Activated naive CD4-positive, alpha-beta T cell treated with anti-CD3 and anti-CD28 coated beads, Interleukin-2, amount 10 ng/mL, durations not matched to agents 7 days and 5 days (primary cell): ENCODE measurements at regions of chr10 and their contacts with region 1.

Region 1: DNA sequence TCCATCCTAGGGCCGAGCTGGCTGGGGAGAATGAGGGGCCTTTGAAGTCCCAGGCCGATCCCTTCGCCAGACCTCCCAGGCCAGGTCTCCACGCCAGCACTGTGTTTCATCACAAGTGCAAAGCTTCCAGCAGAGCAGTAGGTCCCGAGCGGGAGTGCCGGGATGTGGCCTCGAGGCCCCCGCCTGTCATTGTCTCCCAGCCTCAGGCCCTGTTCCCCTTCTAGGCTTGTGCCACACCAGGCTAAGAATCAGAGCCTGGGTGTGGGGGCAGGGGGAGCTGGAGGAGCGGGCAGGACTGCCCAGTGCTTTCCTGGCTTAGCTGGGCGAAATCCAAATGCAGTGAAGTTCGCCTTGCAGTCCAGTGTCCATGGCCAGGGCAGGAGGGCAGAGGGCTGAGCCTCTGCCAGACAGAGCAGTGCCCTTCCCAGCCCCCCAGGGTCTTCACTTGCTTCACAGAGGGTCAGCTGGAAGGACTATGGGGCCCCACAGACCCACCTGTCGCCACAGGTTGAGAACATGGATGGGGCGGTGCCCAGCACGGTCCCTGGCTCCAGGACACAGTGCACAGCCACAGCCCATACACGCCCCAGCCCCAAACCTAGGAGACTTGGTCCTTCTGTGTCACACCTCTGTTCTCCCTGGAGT is 20.2 kb upstream of the PFKFB3 start:
- DNase-seq: no peak
- H3K4me3 Mint-ChIP-seq: no peak overlapping the region
- H3K27ac Mint-ChIP-seq: no peak overlapping the region
- H3K4me1 Mint-ChIP-seq: peaks cover 30% of the 10 kb centered on the region
- H3K27me3 Mint-ChIP-seq: no peaks in the 10 kb centered on the region

Region 2: DNA sequence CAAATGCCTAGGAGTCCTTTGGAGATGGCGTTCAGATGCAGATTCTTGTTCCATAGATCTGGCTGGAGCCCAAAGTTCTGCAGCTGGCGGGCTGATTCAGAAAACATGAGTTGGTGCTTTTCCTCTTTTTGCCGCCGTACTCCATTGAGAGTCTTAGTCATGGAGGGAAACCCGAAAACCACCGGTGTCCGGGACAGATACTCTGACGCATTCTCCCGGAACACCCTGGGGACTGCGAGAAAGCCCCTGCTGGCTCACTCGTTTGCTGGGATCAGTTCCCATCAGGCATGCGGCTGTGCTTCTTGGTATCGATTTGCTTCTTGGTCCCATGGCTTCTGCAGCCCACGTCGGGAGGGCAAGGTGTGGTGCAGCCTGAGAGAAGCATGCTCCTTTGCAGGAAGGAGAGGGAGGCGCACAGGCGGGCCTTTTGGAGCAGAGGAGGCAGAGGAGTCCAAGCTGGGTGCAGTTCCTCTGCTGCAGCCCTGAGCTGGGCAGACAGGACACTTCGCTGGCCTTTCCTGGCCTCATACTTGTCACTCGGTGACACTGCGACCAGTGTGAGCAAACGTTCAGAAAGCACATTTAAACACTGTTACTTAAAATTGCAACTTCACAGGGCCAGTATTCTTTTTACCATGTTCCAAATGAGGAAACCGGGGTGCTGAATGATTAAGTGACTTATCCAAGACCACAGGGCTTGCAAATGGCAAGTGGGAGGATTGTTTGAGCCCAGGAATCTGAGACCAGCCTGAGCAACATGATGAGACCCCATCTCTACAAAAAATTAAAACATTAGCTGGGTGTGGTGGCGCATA is 10.5 kb before region 1 on chr10:
- CTCF ChIA-PET with region 1: interaction called, 13 read pairs
- DNase-seq: no peak
- H3K4me3 Mint-ChIP-seq: no peak overlapping the region
- H3K27ac Mint-ChIP-seq: no peak overlapping the region
- H3K4me1 Mint-ChIP-seq: peaks cover 84% of the 10 kb centered on the region
- H3K27me3 Mint-ChIP-seq: no peaks in the 10 kb centered on the region